PC-3 (cell line): ENCODE measurements at regions of chr2 and their contacts with region 1.

Region 1: GRCh38 chr2:191501561-191502168 is 176.3 kb upstream of the NABP1 start:
- DNase-seq: peak; percentile 70
- ATAC-seq: peak; percentile 54
- H3K4me3 ChIP-seq: no peak overlapping the region
- H3K27ac ChIP-seq: no peak overlapping the region
- H3K4me1 ChIP-seq: peaks cover 10% of the 10 kb centered on the region
- H3K27me3 ChIP-seq: no peaks in the 10 kb centered on the region
- CTCF ChIP-seq: peak; percentile 84

Region 2: DNA sequence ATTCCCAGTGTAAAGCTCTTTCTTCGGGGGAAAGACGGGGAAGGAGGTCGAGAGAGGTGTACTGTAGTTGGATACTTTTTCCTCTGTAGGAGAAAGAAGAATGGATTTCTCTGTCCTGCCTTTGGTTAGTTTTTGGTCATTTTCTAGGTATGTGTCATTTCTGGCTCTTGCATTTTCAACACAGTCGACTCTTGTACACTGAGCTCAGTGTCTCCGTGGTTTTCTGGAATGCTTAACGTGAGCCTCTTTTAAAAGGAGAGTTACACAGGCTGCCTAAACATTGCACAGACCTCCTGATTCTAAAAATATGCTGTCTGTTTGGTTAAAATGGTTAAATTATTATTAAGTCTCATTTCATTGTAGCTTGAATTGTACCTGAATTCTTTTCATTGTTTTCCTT is 642.8 kb before region 1 on chr2:
- CTCF ChIA-PET with region 1: no interaction called
- POLR2A ChIA-PET with region 1: no interaction called
- intact Hi-C with region 1: no loop called
- DNase-seq: peak; percentile 70
- ATAC-seq: peak; percentile 93
- H3K4me3 ChIP-seq: no peak overlapping the region
- H3K27ac ChIP-seq: peak overlapping the region; percentile 10; the same call in 1 of the 2 replicates
- H3K4me1 ChIP-seq: peaks cover 18% of the 10 kb centered on the region
- H3K27me3 ChIP-seq: no peaks in the 10 kb centered on the region
- CTCF ChIP-seq: no peak

Region 3: GRCh38 chr2:191165176-191165643 is 336.5 kb before region 1 on chr2:
- CTCF ChIA-PET with region 1: interaction called, 8 read pairs
- POLR2A ChIA-PET with region 1: no interaction called
- intact Hi-C with region 1: loop called (anchors 1 kb)
- DNase-seq: peak; percentile 80
- ATAC-seq: peak; percentile 12; the same call in 1 of the 2 replicates
- H3K4me3 ChIP-seq: no peak overlapping the region
- H3K27ac ChIP-seq: peak overlapping the region; percentile 90; the same call in 1 of the 2 replicates
- H3K4me1 ChIP-seq: peaks cover 51% of the 10 kb centered on the region
- H3K27me3 ChIP-seq: no peaks in the 10 kb centered on the region
- CTCF ChIP-seq: peak; percentile 94

Region 4: GRCh38 chr2:191231995-191232394 is 269.7 kb before region 1 on chr2:
- CTCF ChIA-PET with region 1: interaction called, 3 read pairs
- POLR2A ChIA-PET with region 1: no interaction called
- intact Hi-C with region 1: loop called (anchors 5 kb)
- DNase-seq: no peak
- ATAC-seq: no peak
- H3K4me3 ChIP-seq: no peak overlapping the region
- H3K27ac ChIP-seq: no peak overlapping the region
- H3K4me1 ChIP-seq: peaks cover 9% of the 10 kb centered on the region
- H3K27me3 ChIP-seq: no peaks in the 10 kb centered on the region
- CTCF ChIP-seq: peak; percentile 54

Region 5: GRCh38 chr2:191376981-191377629 is 124.6 kb before region 1 on chr2:
- CTCF ChIA-PET with region 1: no interaction called
- POLR2A ChIA-PET with region 1: no interaction called
- intact Hi-C with region 1: loop called (anchors 10 kb)
- DNase-seq: peak; percentile 87
- ATAC-seq: peak; percentile 100
- H3K4me3 ChIP-seq: no peak overlapping the region
- H3K27ac ChIP-seq: peak overlapping the region; percentile 72
- H3K4me1 ChIP-seq: peaks cover 24% of the 10 kb centered on the region
- H3K27me3 ChIP-seq: no peaks in the 10 kb centered on the region
- CTCF ChIP-seq: no peak